Activated CD4-positive, alpha-beta T cell treated with anti-CD3 and anti-CD28 coated beads for 36 hours (primary cell): ENCODE measurements at regions of chr5 and their contacts with region 1.

Region 1: GRCh38 chr5:180860887-180861822 is at the start of gene ZFP62:
- DNase-seq: peak; percentile 93
- ATAC-seq: peak; percentile 88
- H3K4me3 Mint-ChIP-seq: peak within 1 kb of the TSS; percentile 93
- H3K27ac Mint-ChIP-seq: peak within 1 kb of the TSS; percentile 93
- H3K4me1 Mint-ChIP-seq: peaks cover 18% of the 10 kb centered on the region
- H3K27me3 Mint-ChIP-seq: peaks cover 1% of the 10 kb centered on the region
- total RNA-seq, gene ZFP62: 30.3 to 31.8 TPM

Region 2: GRCh38 chr5:180494060-180494509 is 367.1 kb before region 1 on chr5 and contains the start of gene CNOT6:
- CTCF ChIA-PET with region 1: no interaction called
- POLR2A ChIA-PET with region 1: no interaction called
- intact Hi-C with region 1: loop called in 1 of 2 experiments (anchors 10 kb)
- DNase-seq: peak; percentile 96
- ATAC-seq: peak; percentile 93
- H3K4me3 Mint-ChIP-seq: peak within 1 kb of the TSS; percentile 78
- H3K27ac Mint-ChIP-seq: peak within 1 kb of the TSS; percentile 87
- H3K4me1 Mint-ChIP-seq: peaks cover 32% of the 10 kb centered on the region
- H3K27me3 Mint-ChIP-seq: no peaks in the 10 kb centered on the region
- total RNA-seq, gene CNOT6: 34.4 to 43.2 TPM

Region 3: GRCh38 chr5:180802325-180803180 is 58.6 kb before region 1 on chr5 and contains the start of gene MGAT1:
- CTCF ChIA-PET with region 1: interaction called, 5 read pairs
- POLR2A ChIA-PET with region 1: interaction called, 4 read pairs
- intact Hi-C with region 1: loop called (anchors 1 kb)
- DNase-seq: peak; percentile 90
- ATAC-seq: peak; percentile 46
- H3K4me3 Mint-ChIP-seq: peak within 1 kb of the TSS; percentile 91
- H3K27ac Mint-ChIP-seq: peak within 1 kb of the TSS; percentile 89
- H3K4me1 Mint-ChIP-seq: peaks cover 77% of the 10 kb centered on the region
- H3K27me3 Mint-ChIP-seq: no peaks in the 10 kb centered on the region
- total RNA-seq, gene MGAT1: 93.2 to 125 TPM

Region 4: DNA sequence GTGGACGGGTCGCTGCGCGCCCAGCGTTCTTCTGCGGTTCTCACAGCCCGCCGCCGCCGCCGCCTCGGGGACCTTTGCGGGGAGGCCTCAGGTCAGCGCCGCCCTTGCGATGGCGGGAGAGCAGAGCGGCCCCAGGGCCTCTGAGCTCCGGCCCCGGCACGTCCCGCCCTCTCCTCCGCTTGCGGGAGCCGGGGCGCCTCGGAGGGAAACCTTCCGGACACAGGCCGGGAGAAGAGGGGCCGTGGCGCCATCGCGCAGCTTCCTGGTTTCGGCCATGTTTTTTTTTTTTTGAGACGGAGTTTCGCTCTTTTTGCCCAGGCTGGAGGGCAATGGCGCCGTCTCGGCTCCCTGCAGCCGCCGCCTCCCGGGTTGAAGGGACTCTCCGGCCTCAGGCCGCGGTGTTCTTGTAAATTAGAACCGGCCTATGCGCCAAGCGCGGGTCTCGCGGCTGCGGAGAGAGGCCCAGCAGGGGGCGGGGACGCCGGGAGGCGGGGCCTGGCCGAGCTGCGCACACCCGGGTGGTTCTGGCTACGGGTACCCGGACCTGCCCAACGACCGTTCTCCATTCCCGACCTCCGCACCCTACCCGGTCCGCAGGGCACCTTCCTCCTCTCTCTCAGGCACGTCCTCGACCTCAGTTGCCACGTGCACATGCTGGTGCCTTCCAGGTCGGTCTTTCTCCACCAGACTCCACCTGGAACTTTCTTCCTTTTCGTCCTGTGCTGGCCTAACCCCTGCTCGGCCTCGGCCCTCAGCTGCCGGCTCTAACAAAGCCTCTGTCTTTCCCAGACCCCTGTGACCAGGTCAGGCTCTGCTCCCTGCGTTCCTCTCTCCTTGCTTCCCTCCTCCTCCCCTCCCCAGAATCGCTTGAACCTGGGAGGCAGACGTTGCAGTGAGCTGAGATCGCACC is 29.8 kb before region 1 on chr5:
- CTCF ChIA-PET with region 1: no interaction called
- POLR2A ChIA-PET with region 1: interaction called, 5 read pairs
- intact Hi-C with region 1: loop called (anchors 1 kb)
- DNase-seq: peak; percentile 88
- ATAC-seq: peak; percentile 67
- H3K4me3 Mint-ChIP-seq: peak overlapping the region; percentile 100
- H3K27ac Mint-ChIP-seq: peak overlapping the region; percentile 99
- H3K4me1 Mint-ChIP-seq: peaks cover 44% of the 10 kb centered on the region
- H3K27me3 Mint-ChIP-seq: no peaks in the 10 kb centered on the region

Region 5: DNA sequence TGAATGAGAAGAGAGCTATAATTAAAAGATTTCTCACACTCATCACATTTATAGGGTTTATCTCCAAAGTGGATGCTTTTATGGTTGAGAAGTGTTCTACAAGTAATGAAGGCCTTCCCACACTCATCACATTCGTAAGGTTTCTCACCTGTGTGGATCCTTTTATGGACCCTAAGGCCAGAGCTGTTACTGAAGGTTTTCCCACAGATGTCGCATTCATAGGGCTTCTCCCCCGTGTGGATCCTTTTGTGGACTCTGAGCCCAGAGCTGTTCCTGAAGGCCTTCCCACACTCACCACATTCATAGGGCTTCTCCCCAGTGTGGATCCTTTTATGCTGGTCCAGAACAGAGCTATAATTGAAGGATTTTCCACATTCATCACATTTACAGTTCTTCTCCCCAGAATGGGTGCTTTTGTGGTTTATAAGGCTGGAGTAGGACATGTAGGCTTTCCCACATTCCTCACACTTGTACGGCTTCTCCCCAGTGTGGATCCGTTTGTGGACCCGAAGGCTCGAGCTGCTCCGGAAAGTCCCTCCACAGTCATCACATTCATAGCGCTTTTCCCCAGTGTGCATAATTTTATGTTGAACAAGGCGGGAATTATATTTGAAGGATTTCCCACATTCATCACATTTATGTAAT is 10.6 kb before region 1 on chr5:
- CTCF ChIA-PET with region 1: no interaction called
- POLR2A ChIA-PET with region 1: no interaction called
- intact Hi-C with region 1: no loop called
- DNase-seq: no peak
- ATAC-seq: no peak
- H3K4me3 Mint-ChIP-seq: no peak overlapping the region
- H3K27ac Mint-ChIP-seq: no peak overlapping the region
- H3K4me1 Mint-ChIP-seq: peaks cover 18% of the 10 kb centered on the region
- H3K27me3 Mint-ChIP-seq: no peaks in the 10 kb centered on the region

Region 6: GRCh38 chr5:180920710-180921109 is 59.6 kb after region 1 on chr5:
- CTCF ChIA-PET with region 1: no interaction called
- POLR2A ChIA-PET with region 1: no interaction called
- intact Hi-C with region 1: no loop called
- DNase-seq: no peak
- ATAC-seq: no peak
- H3K4me3 Mint-ChIP-seq: no peak overlapping the region
- H3K27ac Mint-ChIP-seq: no peak overlapping the region
- H3K4me1 Mint-ChIP-seq: no peaks in the 10 kb centered on the region
- H3K27me3 Mint-ChIP-seq: peaks cover 13% of the 10 kb centered on the region

Region 7: GRCh38 chr5:181098762-181099601 is 237.8 kb after region 1 on chr5:
- CTCF ChIA-PET with region 1: no interaction called
- POLR2A ChIA-PET with region 1: interaction called, 3 read pairs
- intact Hi-C with region 1: loop called in 1 of 2 experiments (anchors 2 kb)
- DNase-seq: peak; percentile 30
- ATAC-seq: no peak
- H3K4me3 Mint-ChIP-seq: no peak overlapping the region
- H3K27ac Mint-ChIP-seq: no peak overlapping the region
- H3K4me1 Mint-ChIP-seq: peaks cover 8% of the 10 kb centered on the region
- H3K27me3 Mint-ChIP-seq: peaks cover 24% of the 10 kb centered on the region

Region 8: GRCh38 chr5:181223058-181223728 is 362.0 kb after region 1 on chr5 and contains the start of gene TRIM41:
- CTCF ChIA-PET with region 1: no interaction called
- POLR2A ChIA-PET with region 1: no interaction called
- intact Hi-C with region 1: loop called in 1 of 2 experiments (anchors 1 kb)
- DNase-seq: peak; percentile 98
- ATAC-seq: peak; percentile 64
- H3K4me3 Mint-ChIP-seq: peak within 1 kb of the TSS; percentile 87
- H3K27ac Mint-ChIP-seq: peak within 1 kb of the TSS; percentile 95
- H3K4me1 Mint-ChIP-seq: peaks cover 56% of the 10 kb centered on the region
- H3K27me3 Mint-ChIP-seq: no peaks in the 10 kb centered on the region
- total RNA-seq, gene TRIM41: 27.0 to 30.7 TPM

Region 9: GRCh38 chr5:181260387-181261319 is 399.5 kb after region 1 on chr5 and contains the start of gene TRIM52:
- CTCF ChIA-PET with region 1: no interaction called
- POLR2A ChIA-PET with region 1: no interaction called
- intact Hi-C with region 1: loop called in 1 of 2 experiments (anchors 1 kb)
- DNase-seq: peak; percentile 95
- ATAC-seq: peak; percentile 85
- H3K4me3 Mint-ChIP-seq: peak within 1 kb of the TSS; percentile 91
- H3K27ac Mint-ChIP-seq: peak within 1 kb of the TSS; percentile 95
- H3K4me1 Mint-ChIP-seq: peaks cover 38% of the 10 kb centered on the region
- H3K27me3 Mint-ChIP-seq: no peaks in the 10 kb centered on the region
- total RNA-seq, gene TRIM52: 10.4 to 13.1 TPM